Activated CD8-positive, alpha-beta T cell treated with anti-CD3 and anti-CD28 coated beads for 36 hours (primary cell): ENCODE measurements at regions of chr1 and their contacts with region 1.

Region 1: DNA sequence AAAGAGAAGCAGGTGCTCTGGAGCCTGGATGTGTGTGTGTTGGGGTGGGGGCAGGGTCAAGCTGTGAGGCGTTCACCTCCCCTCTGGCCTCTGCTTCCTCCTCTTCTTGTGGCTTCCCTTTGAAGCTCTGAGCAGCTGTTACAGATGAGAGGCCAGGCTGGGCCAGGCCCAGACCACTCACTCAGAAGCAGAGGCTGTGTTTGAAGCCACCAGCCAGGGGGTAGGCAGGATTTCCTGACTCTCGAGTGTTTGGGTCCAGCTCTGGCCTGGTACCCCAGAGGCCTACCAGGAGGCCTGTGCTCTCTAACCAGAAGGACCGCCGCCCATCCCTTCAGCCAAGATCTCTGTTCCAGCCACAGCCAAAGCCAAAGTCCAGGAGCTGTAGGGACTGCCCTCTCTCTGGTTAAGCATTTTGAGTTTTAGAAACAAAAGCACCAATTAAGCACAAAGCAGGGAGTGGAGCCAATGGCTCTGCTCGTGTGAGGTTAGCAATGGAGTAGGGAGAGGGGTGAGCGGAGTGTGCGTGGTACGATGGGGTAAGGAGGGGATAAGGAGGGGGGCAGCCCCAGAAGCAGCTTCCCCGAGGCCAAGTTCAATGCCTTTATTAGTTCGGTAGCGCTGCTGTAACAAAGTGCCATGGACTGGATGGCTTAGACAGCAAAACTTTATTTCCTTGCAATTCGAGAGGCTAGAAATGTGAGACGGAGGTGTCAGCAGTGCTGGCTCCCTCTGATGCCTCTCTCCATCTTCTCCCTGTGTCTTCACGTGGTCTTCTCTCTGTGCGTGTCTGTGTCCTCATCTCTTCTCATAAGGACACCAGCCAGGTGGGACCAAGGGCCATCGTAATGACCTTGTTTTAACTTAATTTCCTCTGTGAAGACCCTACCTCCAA is 20.5 kb downstream of the RCSD1 start:
- DNase-seq: peak; percentile 41
- ATAC-seq: peak; percentile 68
- H3K4me3 Mint-ChIP-seq: peak overlapping the region; percentile 11
- H3K27ac Mint-ChIP-seq: peak overlapping the region; percentile 68
- H3K4me1 Mint-ChIP-seq: peaks cover 79% of the 10 kb centered on the region
- H3K27me3 Mint-ChIP-seq: no peaks in the 10 kb centered on the region
- CTCF ChIP-seq: no peak

Region 2: DNA sequence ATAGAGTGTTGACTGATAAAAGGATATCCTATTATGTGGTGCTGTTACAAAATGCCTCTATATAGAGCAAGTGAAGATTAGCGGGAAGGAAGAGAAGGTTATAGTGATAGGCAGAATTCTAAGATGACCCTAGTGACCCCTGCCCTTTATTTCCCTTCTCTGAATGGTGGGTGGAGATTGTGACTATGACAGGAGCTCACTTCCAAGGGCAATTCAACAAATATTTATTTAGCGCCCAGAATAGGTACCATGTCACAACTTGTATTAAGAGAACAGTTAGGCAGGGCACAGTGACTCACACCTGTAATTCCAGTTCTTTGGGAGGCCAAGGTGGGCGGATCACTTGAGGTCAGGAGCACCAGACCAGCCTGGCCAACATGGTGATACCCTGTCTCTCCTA is 1047.3 kb before region 1 on chr1:
- CTCF ChIA-PET with region 1: no interaction called
- POLR2A ChIA-PET with region 1: no interaction called
- intact Hi-C with region 1: no loop called
- DNase-seq: no peak
- ATAC-seq: no peak
- H3K4me3 Mint-ChIP-seq: no peak overlapping the region
- H3K27ac Mint-ChIP-seq: no peak overlapping the region
- H3K4me1 Mint-ChIP-seq: no peaks in the 10 kb centered on the region
- H3K27me3 Mint-ChIP-seq: no peaks in the 10 kb centered on the region
- CTCF ChIP-seq: no peak

Region 3: GRCh38 chr1:167635156-167635648 is 15.3 kb before region 1 on chr1:
- CTCF ChIA-PET with region 1: interaction called, 10 read pairs
- POLR2A ChIA-PET with region 1: interaction called, 5 read pairs
- intact Hi-C with region 1: no loop called
- DNase-seq: no peak
- ATAC-seq: no peak
- H3K4me3 Mint-ChIP-seq: no peak overlapping the region
- H3K27ac Mint-ChIP-seq: peak overlapping the region; percentile 98
- H3K4me1 Mint-ChIP-seq: peaks cover 76% of the 10 kb centered on the region
- H3K27me3 Mint-ChIP-seq: no peaks in the 10 kb centered on the region
- CTCF ChIP-seq: no peak